Heart left ventricle (tissue), 16 donors: ENCODE measurements at regions of chr3 and their contacts with region 1.

Region 1: GRCh38 chr3:189148081-189148507 is 23.7 kb upstream of the TPRG1 start:
- DNase-seq: peak in 4 of 5 donors; percentile 54 to 67 (median 60)
- ATAC-seq: peak in 3 of 4 donors; percentile 75 to 78 (median 75)
- H3K4me3 ChIP-seq: no peak overlapping the region
- H3K27ac ChIP-seq: peak overlapping the region in 4 of 12 donors; percentile 7 to 51 (median 27)
- H3K4me1 ChIP-seq: peaks cover 0 to 24% (median 5%) of the 10 kb centered on the region in 12 donors
- H3K27me3 ChIP-seq: no peaks in the 10 kb centered on the region
- CTCF ChIP-seq: peak; percentile 69 to 86 (median 78)
- POLR2A ChIP-seq: no peak

Region 2: GRCh38 chr3:188962253-188963247 is 185.5 kb before region 1 on chr3:
- intact Hi-C with region 1: loop called in 9 of 10 experiments (anchors 5 to 10 kb)
- DNase-seq: no peak
- ATAC-seq: peak in 1 of 4 donors; percentile 31
- H3K4me3 ChIP-seq: no peak overlapping the region
- H3K27ac ChIP-seq: no peak overlapping the region
- H3K4me1 ChIP-seq: peaks cover 0 to 16% (median 6%) of the 10 kb centered on the region in 12 donors
- H3K27me3 ChIP-seq: no peaks in the 10 kb centered on the region
- CTCF ChIP-seq: no peak
- POLR2A ChIP-seq: no peak

Region 3: DNA sequence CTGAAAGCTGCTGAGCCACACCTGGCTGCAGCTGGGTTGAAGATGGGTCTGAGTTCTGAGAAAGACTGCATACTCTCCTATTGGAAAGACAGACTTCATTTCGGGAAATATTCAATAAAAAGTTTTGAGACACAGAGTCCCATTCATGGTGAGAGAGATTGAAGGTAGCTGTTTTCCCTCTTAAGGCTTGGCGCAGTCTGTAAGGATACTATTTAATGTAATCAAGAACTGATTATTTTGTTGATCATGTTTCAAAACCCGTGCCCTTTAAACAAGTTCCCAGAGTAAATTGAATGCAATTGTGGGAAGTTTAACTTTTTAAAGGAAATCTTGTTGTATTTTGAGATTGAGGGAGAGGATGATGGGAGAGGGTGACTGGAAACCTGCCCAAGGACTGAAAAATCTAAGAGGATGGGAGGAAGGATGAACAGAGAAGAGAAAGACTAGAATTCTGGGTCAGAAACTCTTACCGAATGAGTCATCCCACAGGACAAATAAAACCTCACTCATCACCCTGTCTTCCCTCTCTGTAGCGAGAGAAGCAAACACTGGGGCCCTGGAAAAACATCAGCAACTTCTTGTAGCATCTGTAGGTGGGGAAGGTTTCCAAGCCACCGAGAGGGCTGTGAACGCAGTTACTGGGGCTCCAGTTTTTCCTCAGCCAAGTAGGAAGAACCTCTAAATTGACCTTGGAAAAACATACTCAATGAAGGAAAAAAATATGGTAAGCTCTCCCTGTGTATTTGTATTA is 169.5 kb before region 1 on chr3:
- intact Hi-C with region 1: loop called in 1 of 10 experiments (anchors 5 kb)
- DNase-seq: peak in 3 of 5 donors; percentile 36 to 48 (median 45)
- ATAC-seq: peak; percentile 57 to 78 (median 70)
- H3K4me3 ChIP-seq: peak overlapping the region in 1 of 12 donors; percentile 24
- H3K27ac ChIP-seq: peak overlapping the region in 5 of 12 donors; percentile 28 to 77 (median 51)
- H3K4me1 ChIP-seq: peaks cover 0 to 28% (median 4%) of the 10 kb centered on the region in 12 donors
- H3K27me3 ChIP-seq: no peaks in the 10 kb centered on the region
- CTCF ChIP-seq: no peak
- POLR2A ChIP-seq: no peak

Region 4: GRCh38 chr3:189099031-189099471 is 49.0 kb before region 1 on chr3:
- intact Hi-C with region 1: no loop called
- DNase-seq: peak; percentile 82 to 92 (median 85)
- ATAC-seq: peak; percentile 90 to 93 (median 91)
- H3K4me3 ChIP-seq: peak overlapping the region in 3 of 12 donors; percentile 1 to 26 (median 13)
- H3K27ac ChIP-seq: peak overlapping the region; percentile 23 to 88 (median 74)
- H3K4me1 ChIP-seq: peaks cover 0 to 21% (median 2%) of the 10 kb centered on the region in 12 donors
- H3K27me3 ChIP-seq: no peaks in the 10 kb centered on the region
- CTCF ChIP-seq: no peak
- POLR2A ChIP-seq: no peak